Activated CD4-positive, alpha-beta T cell treated with anti-CD3 and anti-CD28 coated beads for 36 hours (primary cell): ENCODE measurements at regions of chr15 and their contacts with region 1.

Region 1: DNA sequence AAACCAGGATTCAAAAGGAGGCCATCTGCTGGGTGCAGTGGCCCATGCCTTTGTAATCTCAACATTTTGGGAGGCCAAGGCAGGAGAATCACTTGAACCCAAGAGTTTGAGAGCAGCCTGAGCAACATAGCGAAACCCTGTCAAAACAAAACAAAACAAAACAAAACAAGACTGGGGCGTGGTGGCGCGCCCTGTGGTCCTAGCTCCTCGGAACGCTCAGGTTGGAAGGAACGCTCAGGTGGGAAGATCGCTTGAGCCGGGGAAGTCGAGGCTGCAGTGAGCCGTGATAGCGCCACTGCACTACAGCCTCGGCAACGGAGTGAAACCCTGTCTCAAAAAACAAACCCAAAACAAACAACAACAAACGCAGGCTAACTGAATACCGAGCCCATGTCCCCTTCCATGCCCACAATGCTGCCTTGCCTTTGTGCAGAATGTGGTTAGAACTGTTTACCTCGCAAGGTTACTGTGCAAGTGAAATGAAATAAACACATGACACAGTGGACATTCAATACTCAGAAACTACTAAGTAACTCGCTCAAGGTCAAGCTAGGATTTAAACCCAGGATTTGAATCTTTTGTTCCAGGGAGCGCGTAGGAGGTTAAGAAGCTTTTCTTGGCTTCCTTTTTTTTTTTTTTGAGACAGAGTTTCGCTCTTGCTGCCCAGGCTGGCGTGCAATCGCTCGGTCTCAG is 766 bp upstream of the EMC4 start:
- DNase-seq: peak; percentile 23
- ATAC-seq: peak; percentile 10
- H3K4me3 Mint-ChIP-seq: peak overlapping the region; percentile 90
- H3K27ac Mint-ChIP-seq: peak overlapping the region; percentile 96
- H3K4me1 Mint-ChIP-seq: peaks cover 17% of the 10 kb centered on the region
- H3K27me3 Mint-ChIP-seq: no peaks in the 10 kb centered on the region

Region 2: GRCh38 chr15:34101366-34102175 is 122.5 kb before region 1 on chr15 and contains the starts of genes EMC7 and PGBD4:
- CTCF ChIA-PET with region 1: no interaction called
- POLR2A ChIA-PET with region 1: no interaction called
- intact Hi-C with region 1: loop called (anchors 1 kb)
- DNase-seq: peak; percentile 99
- ATAC-seq: peak; percentile 99
- H3K4me3 Mint-ChIP-seq: peak within 1 kb of the TSS; percentile 100
- H3K27ac Mint-ChIP-seq: peak within 1 kb of the TSS; percentile 99
- H3K4me1 Mint-ChIP-seq: peaks cover 40% of the 10 kb centered on the region
- H3K27me3 Mint-ChIP-seq: no peaks in the 10 kb centered on the region
- total RNA-seq, gene EMC7: 46.7 to 48.5 TPM
- total RNA-seq, gene PGBD4: 2.3 to 2.4 TPM

Region 3: DNA sequence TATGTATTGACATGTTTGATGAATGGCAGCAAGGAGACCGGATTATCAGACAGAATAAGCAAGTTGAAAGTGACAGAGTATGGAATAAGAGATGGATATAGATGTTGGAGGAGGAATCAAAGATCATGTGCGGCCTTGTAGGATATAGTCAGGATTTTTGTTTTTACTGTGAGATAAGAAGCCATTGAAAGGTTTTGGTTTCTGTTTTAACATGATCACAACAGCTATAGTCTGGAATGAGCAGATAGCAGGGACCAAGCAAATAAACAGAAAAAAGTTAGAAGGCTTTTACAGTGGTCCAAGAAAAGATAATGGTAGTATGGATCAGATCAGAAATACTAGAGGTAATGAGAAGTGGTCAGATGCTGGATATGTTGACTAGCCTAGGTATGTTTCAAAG is 60.9 kb after region 1 on chr15:
- CTCF ChIA-PET with region 1: no interaction called
- POLR2A ChIA-PET with region 1: no interaction called
- intact Hi-C with region 1: no loop called
- DNase-seq: no peak
- ATAC-seq: peak; percentile 53
- H3K4me3 Mint-ChIP-seq: no peak overlapping the region
- H3K27ac Mint-ChIP-seq: peak overlapping the region; percentile 71
- H3K4me1 Mint-ChIP-seq: peaks cover 22% of the 10 kb centered on the region
- H3K27me3 Mint-ChIP-seq: no peaks in the 10 kb centered on the region

Region 4: GRCh38 chr15:34337557-34338306 is 113.7 kb after region 1 on chr15 and contains the start of gene SLC12A6:
- CTCF ChIA-PET with region 1: interaction called, 5 read pairs
- POLR2A ChIA-PET with region 1: no interaction called
- intact Hi-C with region 1: loop called in 1 of 2 experiments (anchors 5 kb)
- DNase-seq: peak; percentile 95
- ATAC-seq: peak; percentile 82
- H3K4me3 Mint-ChIP-seq: peak within 1 kb of the TSS; percentile 83
- H3K27ac Mint-ChIP-seq: peak within 1 kb of the TSS; percentile 97
- H3K4me1 Mint-ChIP-seq: peaks cover 67% of the 10 kb centered on the region
- H3K27me3 Mint-ChIP-seq: no peaks in the 10 kb centered on the region
- total RNA-seq, gene SLC12A6: 18.2 to 22.1 TPM

Region 5: DNA sequence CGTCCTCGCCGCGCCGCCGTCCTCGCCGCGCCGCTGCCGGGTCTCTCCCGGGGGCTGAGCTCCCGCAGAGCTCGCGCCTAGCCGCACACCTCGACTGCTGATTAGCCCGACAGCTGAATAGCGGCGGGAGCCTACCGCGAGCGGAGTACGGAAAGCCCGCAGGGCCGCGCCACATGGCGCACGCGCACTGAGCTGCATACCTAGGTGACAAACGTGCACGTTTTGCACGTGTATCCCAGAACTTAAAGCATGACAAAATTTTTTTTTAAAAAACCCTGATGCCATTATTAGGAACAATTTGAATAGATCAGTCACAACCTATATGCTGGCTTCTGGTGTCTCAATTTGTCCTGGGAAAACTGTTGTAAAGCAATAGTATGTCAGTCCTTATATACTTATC is 213.6 kb after region 1 on chr15 and contains the start of gene GOLGA8A:
- CTCF ChIA-PET with region 1: no interaction called
- POLR2A ChIA-PET with region 1: no interaction called
- intact Hi-C with region 1: loop called in 1 of 2 experiments (anchors 10 kb)
- DNase-seq: peak; percentile 94
- ATAC-seq: peak; percentile 85
- H3K4me3 Mint-ChIP-seq: peak within 1 kb of the TSS; percentile 86
- H3K27ac Mint-ChIP-seq: peak within 1 kb of the TSS; percentile 95
- H3K4me1 Mint-ChIP-seq: peaks cover 18% of the 10 kb centered on the region
- H3K27me3 Mint-ChIP-seq: peaks cover under 1% of the 10 kb centered on the region
- total RNA-seq, gene GOLGA8A: 147 to 165 TPM